Posterior cingulate gyrus (tissue), 11 donors: ENCODE measurements at regions of chr14 and their contacts with region 1.

Region 1: GRCh38 chr14:67619446-67620216 is at the start of gene ARG2:
- DNase-seq: peak; percentile 86 to 99 (median 94)

Region 2: DNA sequence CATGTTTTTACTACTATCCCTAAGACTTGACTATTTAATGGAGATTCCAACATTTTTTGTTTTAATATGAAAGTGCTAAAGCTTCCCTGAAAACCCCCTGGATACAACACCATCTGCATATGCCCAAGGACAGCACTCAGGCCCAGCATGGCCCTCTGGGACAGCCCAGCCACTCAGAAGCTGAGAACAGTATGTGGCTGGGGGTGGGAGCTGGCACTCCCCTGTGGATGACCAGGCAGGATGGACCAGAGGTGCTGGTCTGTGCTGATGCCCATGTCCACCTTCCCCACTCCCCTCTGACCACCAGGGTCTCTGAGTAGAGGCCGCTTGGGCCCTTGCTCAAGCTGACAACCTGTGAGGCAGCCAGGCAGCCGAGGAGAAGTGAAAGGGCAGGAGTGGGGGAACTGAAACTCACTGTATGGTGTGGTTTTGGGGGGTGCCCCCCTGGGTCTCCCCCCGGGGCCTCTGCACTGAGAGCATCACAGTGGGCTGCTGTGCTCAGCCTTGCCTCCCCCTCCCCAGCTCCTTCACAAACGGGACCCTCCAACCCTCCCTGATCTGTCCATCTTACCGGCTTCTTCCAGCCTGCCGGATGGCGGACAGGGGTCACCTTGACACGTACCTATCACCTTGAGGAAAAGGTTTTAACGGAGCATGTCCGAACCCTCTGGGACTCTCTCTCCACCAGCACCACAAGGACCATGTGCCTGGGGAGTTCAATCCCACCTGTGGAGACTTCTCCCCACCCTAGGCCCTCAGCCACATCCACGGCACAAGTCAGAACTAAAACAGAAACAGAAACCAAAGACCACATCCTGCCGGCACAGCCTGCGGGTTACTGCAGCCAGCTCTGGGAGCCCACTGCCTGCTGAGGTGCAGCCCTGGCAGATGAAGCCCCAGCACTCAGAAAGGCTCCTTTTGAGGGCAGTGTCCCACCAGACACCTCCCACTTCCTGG is 131.4 kb before region 1 on chr14 and contains the start of gene TMEM229B:
- intact Hi-C with region 1: no loop called
- DNase-seq: peak in 4 of 10 donors; percentile 20 to 64 (median 35)

Region 3: DNA sequence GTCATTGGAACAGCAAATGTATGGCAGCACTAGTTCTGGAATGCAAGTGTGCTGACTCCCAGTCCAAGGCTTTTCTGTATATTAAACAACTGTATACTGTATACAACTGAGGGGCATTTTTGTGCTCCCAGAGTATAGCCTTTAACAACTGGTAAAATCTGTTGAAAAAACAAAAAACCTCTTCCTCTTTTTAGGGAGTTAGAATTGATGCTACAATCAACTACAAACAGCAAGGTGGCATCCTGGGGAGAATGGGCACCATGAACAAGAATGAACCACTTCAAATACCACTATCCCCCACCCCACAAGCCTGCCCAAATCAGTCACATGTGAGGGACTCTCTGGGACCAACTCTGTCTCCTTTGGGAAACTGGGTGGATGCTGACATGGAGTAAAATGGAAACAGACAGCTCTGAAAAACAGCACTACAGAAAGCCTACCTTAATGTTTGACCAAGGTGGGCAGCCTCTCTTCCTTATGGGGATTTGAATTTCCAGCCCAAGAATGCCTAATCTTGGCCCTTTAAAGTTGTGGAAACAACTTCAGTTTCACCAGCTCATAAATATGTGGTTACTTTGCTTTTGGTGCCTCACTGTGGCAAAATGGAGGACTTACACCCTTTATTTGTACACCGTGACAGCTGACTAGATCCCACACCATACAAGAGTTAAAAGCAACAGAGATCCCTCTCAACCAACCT is 47.3 kb after region 1 on chr14:
- intact Hi-C with region 1: loop called (anchors 2 kb)
- DNase-seq: peak in 1 of 10 donors; percentile 12

Region 4: GRCh38 chr14:67704484-67705089 is 85.0 kb after region 1 on chr14:
- intact Hi-C with region 1: loop called (anchors 10 kb)
- DNase-seq: peak in 1 of 10 donors; percentile 20